Left colon (tissue), 2 donors: ENCODE measurements at regions of chr2 and their contacts with region 1.

Region 1: GRCh38 chr2:234550511-234551107 is 53.7 kb upstream of the ARL4C start:
- DNase-seq: peak; percentile 32 to 55
- ATAC-seq: peak; percentile 87

Region 2: DNA sequence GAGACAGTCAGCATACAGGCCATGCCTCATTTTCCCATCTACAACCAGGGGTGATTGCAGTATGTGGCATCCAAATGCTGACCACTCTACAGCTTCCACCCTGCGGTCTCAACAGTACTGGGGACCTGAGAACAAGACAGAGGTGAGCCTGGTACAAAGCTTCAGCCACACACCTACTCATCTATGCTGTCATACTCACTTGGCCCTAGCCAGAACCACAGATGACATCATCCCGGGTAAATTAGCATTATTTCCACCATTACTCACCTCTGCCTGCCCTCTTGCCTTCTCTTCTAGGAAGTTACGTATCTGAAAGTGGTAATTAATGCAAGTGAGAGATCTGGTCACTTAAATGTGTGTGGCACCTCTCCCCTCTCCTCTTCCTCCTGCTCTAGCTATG is 154.5 kb after region 1 on chr2:
- intact Hi-C with region 1: no loop called
- DNase-seq: no peak
- ATAC-seq: no peak

Region 3: DNA sequence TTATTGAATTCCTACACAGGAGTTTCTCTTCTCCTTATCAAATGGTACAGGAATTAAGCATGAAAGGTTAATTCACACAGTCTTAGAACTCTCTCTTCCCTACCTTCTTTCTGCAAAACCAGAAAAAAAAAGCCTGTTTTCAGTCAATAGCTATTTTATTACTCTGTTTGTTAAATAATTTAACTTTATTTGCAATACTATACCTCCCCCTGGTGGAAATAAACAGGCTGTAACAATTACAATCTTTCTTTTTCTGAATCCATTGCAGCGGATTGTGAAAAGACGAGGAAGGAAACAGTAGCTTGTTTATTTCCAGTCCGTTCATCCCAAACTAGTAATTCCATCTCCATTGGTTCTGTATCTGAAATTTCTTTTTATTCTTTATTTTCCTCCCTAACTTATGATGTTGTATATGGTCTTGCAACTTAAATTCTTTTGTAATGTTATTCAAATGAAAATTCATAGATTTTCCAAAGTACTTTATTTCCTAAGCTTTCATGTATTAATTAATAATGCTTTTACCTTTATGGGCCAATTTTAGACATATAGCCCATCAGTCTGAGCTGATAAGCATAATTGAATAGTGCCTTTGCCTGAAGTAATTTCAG is 566.4 kb after region 1 on chr2:
- intact Hi-C with region 1: loop called in 1 of 2 experiments (anchors 5 kb)
- DNase-seq: no peak
- ATAC-seq: peak; percentile 38